A549 (cell line): ENCODE measurements at regions of chr12 and their contacts with region 1.

Region 1: GRCh38 chr12:26832822-26833742 is at the start of gene ITPR2:
- DNase-seq: peak; percentile 88 to 94
- ATAC-seq: peak; percentile 88 to 92
- H3K4me3 ChIP-seq: peak within 1 kb of the TSS; percentile 61
- H3K27ac ChIP-seq: peak within 1 kb of the TSS; percentile 70 to 90
- H3K4me1 ChIP-seq: no peaks in the 10 kb centered on the region
- CTCF ChIP-seq: peak; percentile 60
- EP300 ChIP-seq: no peak
- POLR2A ChIP-seq: peak; percentile 88
- RAD21 ChIP-seq: peak; percentile 4 to 58; a peak in 2 of 5 replicates
- polyA plus RNA-seq, gene ITPR2: 6.0 and 8.1 TPM in 2 replicates

Region 2: DNA sequence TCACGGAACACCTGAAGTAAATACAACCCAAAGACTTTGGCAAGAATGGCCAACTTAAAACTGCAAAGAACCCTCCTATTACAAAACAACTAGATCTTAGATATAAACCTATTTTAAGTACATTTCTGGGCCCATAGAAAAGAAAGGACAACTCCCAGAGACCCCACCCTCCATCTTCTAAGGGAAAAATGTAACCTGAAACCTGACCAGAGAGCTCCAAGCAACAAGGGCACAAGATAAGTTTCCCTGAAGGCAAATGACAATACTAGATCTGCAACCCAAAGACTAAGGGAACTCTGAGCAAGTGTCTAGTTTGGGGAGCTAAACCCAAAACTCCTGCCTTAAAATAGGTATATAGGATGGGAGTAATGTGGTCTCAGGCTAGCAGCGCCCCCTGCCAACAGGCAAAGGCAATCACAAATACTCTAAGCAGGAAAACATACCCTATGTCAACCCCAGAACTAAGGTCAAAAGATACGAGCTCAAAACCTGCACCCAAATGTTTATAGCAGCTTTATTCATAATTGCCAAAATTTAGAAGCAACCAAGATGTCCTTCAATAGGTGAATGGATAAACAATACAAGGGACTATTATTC is 219.0 kb before region 1 on chr12:
- CTCF ChIA-PET with region 1: no interaction called
- POLR2A ChIA-PET with region 1: no interaction called
- DNase-seq: peak in 1 of 2 experiments; percentile 49
- ATAC-seq: peak in 1 of 2 experiments; percentile 82; a peak in 3 of 6 replicates
- H3K4me3 ChIP-seq: no peak overlapping the region
- H3K27ac ChIP-seq: no peak overlapping the region
- H3K4me1 ChIP-seq: no peaks in the 10 kb centered on the region
- CTCF ChIP-seq: peak; percentile 53; the same call in 2 of the 3 replicates
- EP300 ChIP-seq: no peak
- POLR2A ChIP-seq: no peak
- RAD21 ChIP-seq: peak; percentile 56 to 77

Region 3: DNA sequence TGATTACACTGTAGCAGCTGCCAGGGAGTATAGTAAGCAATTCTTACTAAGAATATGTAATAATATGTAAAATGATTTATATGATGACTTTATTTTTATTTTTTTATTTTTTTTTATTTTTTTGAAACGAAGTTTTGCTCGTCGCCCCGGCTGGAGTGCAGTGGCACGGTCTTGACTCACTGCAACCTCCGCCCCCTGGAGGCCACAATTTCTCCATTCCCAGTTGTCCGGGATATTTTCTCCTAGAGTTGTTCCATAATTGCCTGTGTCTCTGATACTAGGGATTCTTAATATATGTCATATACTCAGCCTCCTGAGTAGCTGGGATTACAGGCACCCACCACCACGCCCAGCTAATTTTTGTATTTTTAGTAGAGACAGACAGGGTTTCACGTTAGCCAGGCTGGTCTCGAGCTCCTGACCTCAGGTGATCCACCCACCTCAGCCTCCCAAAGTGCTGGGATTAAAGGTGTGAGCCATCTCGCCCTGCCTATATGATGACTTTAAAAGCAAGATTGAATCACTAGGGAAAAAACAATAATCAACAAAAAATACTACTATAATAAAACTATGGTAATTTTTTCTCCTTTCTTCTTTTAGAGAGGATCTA is 12.1 kb after region 1 on chr12:
- CTCF ChIA-PET with region 1: interaction called, 23 read pairs
- POLR2A ChIA-PET with region 1: interaction called, 7 read pairs
- DNase-seq: peak; percentile 50 to 62
- ATAC-seq: peak; percentile 87 to 96; a peak in 5 of 6 replicates
- H3K4me3 ChIP-seq: no peak overlapping the region
- H3K27ac ChIP-seq: no peak overlapping the region
- H3K4me1 ChIP-seq: no peaks in the 10 kb centered on the region
- CTCF ChIP-seq: peak; percentile 70
- EP300 ChIP-seq: no peak
- POLR2A ChIP-seq: no peak
- RAD21 ChIP-seq: peak; percentile 55 to 58